HEK293 (cell line): ENCODE measurements at regions of chr10 and their contacts with region 1.

Region 1: DNA sequence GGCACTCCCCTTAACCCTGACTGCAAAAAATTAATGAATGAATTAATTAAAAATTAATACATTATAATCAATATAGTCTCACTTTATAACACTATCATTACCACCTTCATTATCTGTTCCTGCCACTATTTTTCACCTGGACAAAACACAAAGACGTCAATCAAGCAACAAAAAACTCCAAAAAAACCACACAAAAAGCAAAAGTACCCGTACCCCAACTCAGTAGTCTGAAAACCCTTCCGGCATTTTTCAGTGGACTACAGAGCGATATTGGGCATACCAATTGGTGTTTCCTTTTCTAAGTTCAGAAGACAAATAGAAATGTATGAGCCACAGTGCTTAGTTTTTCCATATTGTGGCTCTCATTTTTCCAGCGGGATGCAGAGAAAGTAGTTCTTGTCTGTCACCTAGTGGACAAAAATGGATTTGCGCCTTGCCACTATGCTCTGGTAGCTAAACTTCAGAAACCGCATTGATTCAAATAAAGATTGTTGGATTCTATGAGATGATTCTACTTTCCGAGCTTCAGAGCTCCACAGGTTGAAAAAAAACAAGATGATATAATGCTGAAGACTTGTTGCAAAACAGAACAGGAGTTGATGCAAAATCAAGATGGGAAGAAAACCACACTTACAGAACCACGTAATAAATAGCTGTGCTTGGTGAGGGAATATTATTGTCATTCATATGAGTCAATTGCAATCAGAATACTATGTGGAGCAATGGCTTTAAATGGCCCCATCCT is 50.6 kb upstream of the ITGB1 start:
- H3K4me3 ChIP-seq: no peak overlapping the region
- H3K27ac ChIP-seq: no peak overlapping the region
- H3K4me1 ChIP-seq: no peaks in the 10 kb centered on the region; the same call in none of the 2 replicates
- CTCF ChIP-seq: peak; percentile 72

Region 2: GRCh38 chr10:32795598-32796183 is 213.0 kb before region 1 on chr10:
- CTCF ChIA-PET with region 1: interaction called, 12 read pairs
- POLR2A ChIA-PET with region 1: no interaction called
- H3K4me3 ChIP-seq: no peak overlapping the region
- H3K27ac ChIP-seq: no peak overlapping the region
- H3K4me1 ChIP-seq: no peaks in the 10 kb centered on the region
- CTCF ChIP-seq: peak; percentile 62

Region 3: DNA sequence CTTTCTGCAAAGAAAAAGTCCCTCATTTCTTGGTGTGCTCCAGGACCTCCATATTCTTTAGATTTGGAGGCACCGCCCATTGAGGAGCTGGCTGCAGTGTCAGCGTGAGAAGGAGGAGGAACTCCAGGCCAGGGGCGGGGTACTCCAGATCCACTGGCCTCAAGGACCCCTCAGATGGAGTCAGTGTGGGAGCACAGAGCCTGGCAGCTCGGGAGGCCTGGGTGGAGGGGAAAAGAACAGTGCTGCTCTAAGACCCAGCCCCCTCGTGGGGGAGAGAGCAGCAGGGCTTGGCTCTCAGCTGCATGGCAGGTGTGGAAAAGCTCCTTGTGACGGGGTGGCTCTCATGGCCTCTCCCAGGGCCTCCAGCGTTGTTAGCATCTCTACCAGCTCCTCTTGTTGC is 121.2 kb before region 1 on chr10:
- CTCF ChIA-PET with region 1: interaction called, 13 read pairs
- POLR2A ChIA-PET with region 1: no interaction called
- H3K4me3 ChIP-seq: no peak overlapping the region
- H3K27ac ChIP-seq: no peak overlapping the region
- H3K4me1 ChIP-seq: no peaks in the 10 kb centered on the region
- CTCF ChIP-seq: no peak

Region 4: DNA sequence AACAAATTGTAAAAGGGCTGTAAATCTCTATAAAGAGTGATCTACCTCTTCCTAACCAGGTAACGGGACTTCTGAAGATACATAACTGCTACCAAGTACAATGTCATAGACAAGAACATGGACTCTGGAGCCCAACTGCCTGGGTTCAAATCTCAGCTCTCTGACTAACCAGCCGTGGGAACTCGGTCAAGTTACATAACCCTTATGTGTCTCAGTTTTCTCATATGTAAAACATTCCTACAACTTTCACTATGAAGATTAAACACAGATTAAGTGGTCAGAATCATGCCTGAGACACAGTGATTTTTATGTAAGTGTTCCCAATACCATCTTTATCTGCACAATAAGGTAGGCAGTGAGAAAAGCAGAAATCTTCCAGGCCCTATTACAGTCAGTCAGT is 103.2 kb before region 1 on chr10:
- CTCF ChIA-PET with region 1: no interaction called
- POLR2A ChIA-PET with region 1: no interaction called
- H3K4me3 ChIP-seq: no peak overlapping the region
- H3K27ac ChIP-seq: no peak overlapping the region
- H3K4me1 ChIP-seq: no peaks in the 10 kb centered on the region
- CTCF ChIP-seq: no peak

Region 5: DNA sequence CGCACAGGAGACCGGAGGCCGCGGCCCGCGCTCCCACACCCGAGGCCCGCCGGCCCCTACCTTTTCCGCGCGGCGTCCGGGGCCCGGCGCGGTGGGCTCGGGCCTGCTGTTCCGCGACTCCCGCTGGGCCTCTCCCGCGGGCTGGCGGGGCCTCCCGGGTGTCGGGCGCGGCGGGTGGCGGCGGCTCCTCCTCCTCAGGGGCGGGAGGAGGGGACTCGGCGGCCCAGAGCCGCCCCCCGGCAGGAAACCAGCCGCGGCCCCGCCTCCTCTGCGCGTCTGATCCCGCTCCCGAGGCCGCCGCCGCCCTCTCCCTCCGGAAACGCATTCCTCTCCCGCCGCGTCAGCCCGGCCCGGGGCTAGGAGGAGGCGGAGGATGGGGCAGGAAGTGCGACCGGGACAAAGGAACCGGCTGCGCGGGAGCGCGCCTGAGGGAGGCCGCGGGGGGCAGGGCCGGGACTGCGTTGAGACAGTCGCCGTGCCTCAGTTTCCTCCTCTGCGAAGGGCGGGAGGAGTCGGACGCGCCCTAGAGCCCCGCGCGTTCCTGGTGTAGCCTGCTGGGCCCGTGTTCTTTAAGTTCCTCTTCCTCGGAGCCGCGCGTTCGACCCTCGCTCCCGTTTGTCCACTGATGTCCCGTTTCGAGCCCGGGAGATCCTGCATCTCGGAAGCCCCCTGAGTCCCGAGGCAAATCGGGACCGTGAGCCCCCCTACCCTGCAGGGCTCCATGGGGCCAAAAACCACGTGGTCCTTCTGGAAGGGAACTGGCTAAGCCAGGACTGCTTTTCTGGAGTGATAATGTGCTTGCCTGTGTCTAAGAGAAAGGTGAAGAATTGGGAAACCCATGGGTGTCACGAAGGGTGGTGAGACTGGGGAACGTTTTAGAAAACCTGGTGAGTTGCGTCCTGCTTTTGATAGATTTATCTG is 50.3 kb before region 1 on chr10 and contains the start of gene ITGB1:
- CTCF ChIA-PET with region 1: interaction called, 14 read pairs
- POLR2A ChIA-PET with region 1: no interaction called
- H3K4me3 ChIP-seq: peak within 1 kb of the TSS; percentile 92
- H3K27ac ChIP-seq: peak within 1 kb of the TSS; percentile 86
- H3K4me1 ChIP-seq: peaks cover 13% of the 10 kb centered on the region
- CTCF ChIP-seq: no peak; the same call in 1 of the 2 replicates

Region 6: GRCh38 chr10:33022090-33022489 is 13.4 kb after region 1 on chr10:
- CTCF ChIA-PET with region 1: interaction called, 17 read pairs
- POLR2A ChIA-PET with region 1: no interaction called
- H3K4me3 ChIP-seq: no peak overlapping the region
- H3K27ac ChIP-seq: no peak overlapping the region
- H3K4me1 ChIP-seq: no peaks in the 10 kb centered on the region
- CTCF ChIP-seq: no peak

Region 7: DNA sequence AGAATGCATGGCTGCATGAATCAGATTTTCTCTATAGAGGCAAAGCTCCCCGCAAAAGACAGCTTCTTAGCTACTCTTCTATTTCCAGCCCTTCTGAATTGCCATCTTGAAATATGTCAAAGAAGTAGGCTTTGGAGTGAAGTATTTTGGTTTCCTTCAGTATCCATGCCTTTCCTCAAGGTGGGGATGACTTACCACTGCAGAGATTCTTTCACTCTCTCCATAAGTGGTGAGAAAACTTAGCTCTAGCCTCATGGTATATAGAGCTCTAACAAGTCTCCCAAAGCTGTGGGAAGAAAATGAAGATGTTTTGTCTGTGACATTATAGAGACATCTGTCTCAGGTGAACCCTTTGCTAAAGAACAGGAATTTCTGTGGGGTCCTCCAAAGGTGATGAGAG is 39.0 kb after region 1 on chr10:
- CTCF ChIA-PET with region 1: no interaction called
- POLR2A ChIA-PET with region 1: no interaction called
- H3K4me3 ChIP-seq: no peak overlapping the region
- H3K27ac ChIP-seq: no peak overlapping the region
- H3K4me1 ChIP-seq: no peaks in the 10 kb centered on the region
- CTCF ChIP-seq: no peak

Region 8: DNA sequence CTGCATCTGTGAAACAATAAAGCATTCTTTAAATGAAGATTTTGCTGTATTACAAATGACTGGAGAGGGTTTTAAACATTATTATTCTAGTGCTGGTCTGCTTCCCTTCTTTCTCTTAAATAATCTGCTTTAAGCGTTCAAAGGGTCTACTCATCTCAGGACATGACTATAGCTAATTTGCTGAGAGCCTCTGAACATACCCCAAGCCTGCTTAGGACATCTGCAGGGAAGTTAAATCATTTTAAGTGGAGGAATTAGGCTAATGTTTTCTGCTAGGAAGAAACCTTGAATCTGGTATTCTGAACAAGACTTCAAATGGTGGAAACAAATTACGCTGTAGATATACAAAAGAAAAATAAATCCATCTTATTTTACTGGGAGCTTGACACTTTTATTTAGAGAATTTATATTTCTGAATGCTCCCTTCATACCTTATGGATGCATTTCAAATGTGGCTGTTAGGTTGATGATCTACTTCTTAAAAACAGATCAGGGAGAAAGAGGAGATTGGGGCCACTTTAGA is 73.8 kb after region 1 on chr10:
- CTCF ChIA-PET with region 1: no interaction called
- POLR2A ChIA-PET with region 1: no interaction called
- H3K4me3 ChIP-seq: no peak overlapping the region
- H3K27ac ChIP-seq: no peak overlapping the region
- H3K4me1 ChIP-seq: no peaks in the 10 kb centered on the region
- CTCF ChIP-seq: no peak

Region 9: DNA sequence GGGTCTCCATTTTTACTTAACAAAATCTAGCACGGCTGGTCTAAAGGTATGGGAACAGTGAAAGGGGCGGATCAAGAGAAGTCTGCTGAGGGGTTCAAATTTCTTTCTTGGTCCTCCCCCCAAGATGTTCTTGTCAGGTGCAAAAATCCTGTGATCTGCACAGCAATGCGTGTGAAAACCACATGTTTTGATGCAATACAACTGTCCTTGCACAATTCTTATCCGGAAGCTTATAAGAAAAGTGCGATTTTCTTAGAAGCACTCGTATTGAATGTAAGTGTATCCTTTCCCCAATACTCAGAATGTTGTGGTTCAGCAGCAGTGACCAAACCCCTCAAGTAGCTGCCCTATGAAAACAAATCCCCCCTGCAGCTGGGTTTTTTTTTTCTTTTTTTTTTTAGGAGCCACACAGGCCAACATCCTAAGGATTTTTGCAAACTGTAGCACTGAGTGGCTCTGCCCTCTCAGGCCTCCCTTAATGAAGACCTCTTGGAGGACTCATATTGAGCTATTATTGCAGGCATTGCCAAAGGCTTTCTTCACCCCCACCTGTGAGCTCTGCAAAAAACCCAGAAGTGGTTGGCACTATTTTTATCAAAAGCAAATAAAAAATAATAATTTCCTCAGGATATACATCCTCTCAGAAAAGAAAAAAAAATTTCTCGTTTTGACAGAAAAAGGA is 101.3 kb after region 1 on chr10:
- CTCF ChIA-PET with region 1: no interaction called
- POLR2A ChIA-PET with region 1: no interaction called
- H3K4me3 ChIP-seq: no peak overlapping the region
- H3K27ac ChIP-seq: no peak overlapping the region
- H3K4me1 ChIP-seq: no peaks in the 10 kb centered on the region
- CTCF ChIP-seq: no peak